ENCODE measurements at regions of chr12 and their contacts with region 1.

Region 1: DNA sequence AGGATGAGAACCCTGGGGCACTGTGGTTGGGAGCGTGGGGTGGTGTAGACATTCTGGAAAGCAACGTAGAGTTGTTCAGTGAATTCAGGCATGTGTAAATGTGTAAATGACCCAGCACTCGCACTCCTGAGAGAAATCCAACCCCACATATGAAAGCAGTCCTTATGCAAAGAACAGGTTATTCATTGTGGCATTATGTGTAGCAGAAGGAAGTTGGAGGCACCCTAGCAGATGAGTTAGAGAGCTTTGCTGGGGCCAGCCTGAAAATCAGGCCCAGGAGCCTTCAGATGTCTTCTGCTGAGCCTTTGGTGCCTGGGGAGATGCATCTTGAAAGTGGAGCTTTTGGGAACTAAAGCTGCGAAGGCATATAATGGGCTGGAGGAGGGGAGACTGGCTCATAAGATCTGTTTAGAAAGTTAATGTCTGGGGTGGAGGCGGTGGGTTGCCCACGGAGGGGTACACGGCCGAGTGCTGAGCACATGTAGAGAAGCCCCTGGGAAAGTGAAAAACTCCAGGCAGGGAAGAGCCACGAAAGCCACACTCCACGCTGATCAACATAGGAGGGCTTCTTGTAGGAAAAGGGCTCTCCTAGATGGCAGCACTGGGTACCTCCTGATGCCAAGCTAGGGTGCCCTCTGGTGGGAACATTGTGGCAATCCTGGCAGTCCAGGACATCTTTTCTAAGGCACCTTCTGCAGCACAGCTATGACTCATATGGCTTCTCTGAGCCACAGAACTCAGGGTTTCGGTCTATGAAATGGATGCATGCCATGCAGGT is 6.0 kb upstream of the KRT83 start:
- DNase-seq: peak; percentile 97
- H3K4me3 ChIP-seq: no peak overlapping the region
- H3K27ac ChIP-seq: peak overlapping the region; percentile 56
- H3K4me1 ChIP-seq: peaks cover 15% of the 10 kb centered on the region
- H3K27me3 ChIP-seq: no peaks in the 10 kb centered on the region
- CTCF ChIP-seq: peak; percentile 99 to 100

Region 2: DNA sequence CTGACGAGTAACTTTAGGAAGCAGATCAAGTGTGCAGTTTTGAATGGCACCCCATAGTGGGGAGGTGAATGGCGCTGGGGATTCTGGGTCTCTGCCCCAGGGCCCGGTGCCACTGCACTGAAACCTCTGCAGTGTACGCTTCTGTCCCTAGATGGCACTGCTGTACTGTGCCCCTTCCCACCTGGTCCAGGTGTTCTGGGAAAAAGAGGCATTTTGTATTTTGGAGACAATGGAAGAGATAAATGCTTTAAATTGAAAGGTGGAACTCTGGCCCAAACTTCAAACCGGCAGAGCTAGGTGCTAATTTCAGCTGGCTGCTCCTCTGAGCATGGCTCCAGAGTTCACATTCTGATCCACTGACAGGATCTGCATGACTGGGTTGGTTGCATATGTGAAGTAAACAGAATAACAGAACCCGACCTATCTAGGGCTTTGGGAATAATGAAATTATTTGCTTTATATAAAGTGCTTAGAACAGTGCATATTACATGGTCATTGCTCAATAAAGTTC is 187.6 kb before region 1 on chr12:
- CTCF ChIA-PET with region 1: interaction called, 13 read pairs
- dilution Hi-C with region 1: no loop called
- in situ Hi-C with region 1: no loop called
- intact Hi-C with region 1: loop called (anchors 1 kb)
- DNase-seq: peak; percentile 53
- H3K4me3 ChIP-seq: no peak overlapping the region
- H3K27ac ChIP-seq: no peak overlapping the region
- H3K4me1 ChIP-seq: peaks cover 15% of the 10 kb centered on the region
- H3K27me3 ChIP-seq: no peaks in the 10 kb centered on the region
- CTCF ChIP-seq: peak; percentile 98

Region 3: GRCh38 chr12:52156736-52157565 is 170.3 kb before region 1 on chr12:
- CTCF ChIA-PET with region 1: interaction called, 8 read pairs
- dilution Hi-C with region 1: no loop called
- in situ Hi-C with region 1: loop called in 1 of 2 experiments (anchors 5 kb)
- intact Hi-C with region 1: loop called (anchors 1 kb)
- DNase-seq: peak; percentile 80
- H3K4me3 ChIP-seq: no peak overlapping the region
- H3K27ac ChIP-seq: peak overlapping the region; percentile 96
- H3K4me1 ChIP-seq: peaks cover 46% of the 10 kb centered on the region
- H3K27me3 ChIP-seq: no peaks in the 10 kb centered on the region
- CTCF ChIP-seq: peak; percentile 90 to 98

Region 4: DNA sequence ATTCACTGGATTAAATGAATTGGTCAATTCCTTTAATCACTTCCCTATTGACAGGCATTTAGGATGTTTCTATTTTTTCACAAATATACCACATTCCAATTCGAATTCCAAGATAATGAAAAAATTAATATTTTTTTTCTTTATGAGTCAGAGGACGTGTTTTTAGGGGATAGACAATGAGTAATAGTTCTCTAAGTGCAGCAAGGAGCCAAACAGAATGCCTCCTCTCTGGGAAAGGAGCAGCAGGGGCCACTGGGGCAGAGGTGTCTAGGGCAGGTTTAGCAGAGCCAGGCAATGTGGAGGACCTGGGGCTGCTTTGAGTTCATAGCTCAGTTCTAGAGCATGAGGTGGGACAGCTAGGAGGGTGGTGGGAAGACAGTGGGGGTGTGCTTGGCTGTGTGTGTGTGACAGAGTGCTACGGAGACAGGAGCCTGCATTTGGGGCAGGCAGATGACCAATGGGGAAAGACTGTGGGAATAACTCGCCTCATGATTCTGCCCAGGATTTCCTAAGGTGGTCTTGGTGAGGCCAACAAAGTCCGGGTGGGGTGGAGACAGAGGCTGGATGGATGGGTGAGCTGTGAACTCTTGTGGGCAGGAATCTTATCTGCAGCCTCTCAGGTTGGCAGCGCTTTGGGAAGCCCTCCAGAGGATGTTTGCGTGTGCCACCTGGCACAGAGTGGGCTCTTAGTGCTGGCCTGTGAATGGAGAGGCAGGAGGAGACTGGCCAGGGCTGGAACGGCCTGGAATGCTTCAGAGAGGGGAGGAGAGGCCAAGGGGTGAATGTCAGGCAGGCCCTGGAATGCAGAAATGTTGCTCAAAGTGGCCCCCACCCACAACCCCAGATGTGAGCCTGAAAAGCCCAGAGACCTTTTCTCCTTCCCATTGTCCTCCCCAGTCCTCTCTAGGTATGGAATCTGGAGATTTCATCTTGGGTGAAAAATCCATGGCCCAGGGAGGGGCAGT is 96.6 kb before region 1 on chr12:
- CTCF ChIA-PET with region 1: no interaction called
- dilution Hi-C with region 1: loop called (anchors 5 kb)
- in situ Hi-C with region 1: no loop called
- intact Hi-C with region 1: loop called (anchors 1 kb)
- DNase-seq: peak; percentile 75
- H3K4me3 ChIP-seq: peak overlapping the region in 1 of 3 experiments; percentile 5
- H3K27ac ChIP-seq: peak overlapping the region; percentile 79
- H3K4me1 ChIP-seq: peaks cover 57% of the 10 kb centered on the region
- H3K27me3 ChIP-seq: no peaks in the 10 kb centered on the region
- CTCF ChIP-seq: no peak

Region 5: DNA sequence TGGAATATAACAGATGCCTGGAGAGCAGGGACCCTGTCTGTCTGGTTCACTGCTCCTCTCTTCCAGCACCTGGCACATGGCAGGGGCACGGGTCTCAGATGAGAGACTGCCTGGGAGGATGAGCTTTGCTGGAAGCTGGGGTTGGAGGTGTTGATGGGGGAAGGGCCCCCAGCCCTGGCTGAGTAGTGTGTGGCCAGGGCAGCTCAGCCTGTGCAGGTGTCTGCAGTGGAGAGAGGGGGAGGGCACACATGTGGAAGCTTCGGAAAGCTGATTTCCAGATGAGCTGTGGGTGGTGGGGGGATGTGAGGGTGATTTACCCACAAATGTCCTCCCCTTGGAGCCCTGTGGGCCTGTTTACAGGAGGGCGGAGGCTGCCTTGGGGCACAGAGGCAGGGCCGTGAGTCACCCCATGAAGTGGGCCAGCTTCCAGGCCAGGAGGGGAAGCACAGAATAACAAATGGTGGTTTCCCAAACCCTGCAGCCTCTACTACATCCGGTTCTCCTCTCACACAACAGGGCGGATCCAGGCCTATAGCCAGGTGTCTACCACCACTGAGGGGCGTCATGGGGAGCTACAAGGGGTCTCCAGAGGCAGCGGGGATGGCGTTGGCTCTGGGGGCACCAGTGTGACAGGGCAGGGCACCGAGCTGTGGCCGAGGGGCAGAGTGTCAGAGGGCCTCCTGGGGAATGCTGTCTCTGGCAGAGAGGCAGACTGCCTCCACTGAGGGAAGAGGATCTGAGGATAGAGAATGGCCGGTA is 83.2 kb before region 1 on chr12:
- CTCF ChIA-PET with region 1: interaction called, 10 read pairs
- dilution Hi-C with region 1: loop called (anchors 5 kb)
- in situ Hi-C with region 1: no loop called
- intact Hi-C with region 1: no loop called
- DNase-seq: peak; percentile 96
- H3K4me3 ChIP-seq: no peak overlapping the region
- H3K27ac ChIP-seq: peak overlapping the region; percentile 72
- H3K4me1 ChIP-seq: peaks cover 52% of the 10 kb centered on the region
- H3K27me3 ChIP-seq: no peaks in the 10 kb centered on the region
- CTCF ChIP-seq: no peak

Region 6: GRCh38 chr12:52259847-52260246 is 67.4 kb before region 1 on chr12:
- CTCF ChIA-PET with region 1: interaction called, 3 read pairs
- dilution Hi-C with region 1: no loop called
- in situ Hi-C with region 1: no loop called
- intact Hi-C with region 1: loop called (anchors 1 kb)
- DNase-seq: no peak
- H3K4me3 ChIP-seq: no peak overlapping the region
- H3K27ac ChIP-seq: no peak overlapping the region
- H3K4me1 ChIP-seq: no peaks in the 10 kb centered on the region
- H3K27me3 ChIP-seq: no peaks in the 10 kb centered on the region
- CTCF ChIP-seq: peak in 1 of 2 donors; percentile 20

Region 7: DNA sequence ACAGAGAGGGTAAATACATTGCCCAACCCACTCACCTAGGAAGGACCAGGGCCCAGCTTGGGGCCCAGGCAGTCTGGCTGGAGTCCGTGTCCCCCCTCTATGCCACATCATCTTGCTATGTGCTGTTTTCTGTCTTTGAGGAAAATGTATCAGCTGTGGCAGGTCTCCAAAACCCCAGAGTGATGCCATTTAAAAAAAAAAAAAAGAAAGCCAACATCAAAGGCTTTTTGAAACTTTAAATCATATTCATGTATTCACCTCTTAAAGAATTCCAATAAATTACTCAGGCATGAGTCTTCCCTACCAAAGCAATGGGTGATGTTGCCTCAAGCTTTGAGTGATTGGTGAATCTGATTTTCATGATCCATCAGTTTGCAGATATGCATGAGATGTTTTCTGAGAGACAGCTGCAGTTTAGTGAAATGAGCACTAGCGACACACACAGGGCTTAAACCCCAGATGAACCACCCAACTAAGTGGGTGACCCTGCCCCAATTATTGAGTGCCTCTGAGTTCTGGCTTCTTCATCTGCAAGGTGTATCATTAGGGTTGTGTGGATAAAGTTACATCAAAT is 42.0 kb before region 1 on chr12:
- CTCF ChIA-PET with region 1: interaction called, 6 read pairs
- dilution Hi-C with region 1: loop called (anchors 5 kb)
- in situ Hi-C with region 1: loop called in 1 of 2 experiments (anchors 5 kb)
- intact Hi-C with region 1: loop called (anchors 1 kb)
- DNase-seq: peak; percentile 82
- H3K4me3 ChIP-seq: no peak overlapping the region
- H3K27ac ChIP-seq: peak overlapping the region; percentile 54
- H3K4me1 ChIP-seq: peaks cover 59% of the 10 kb centered on the region
- H3K27me3 ChIP-seq: no peaks in the 10 kb centered on the region
- CTCF ChIP-seq: no peak